Activated CD4-positive, alpha-beta memory T cell treated with anti-CD3 and anti-CD28 coated beads, Interleukin-2, amount 10 ng/mL, durations not matched to agents 7 days and 5 days (primary cell): ENCODE measurements at regions of chr17 and their contacts with region 1.

Region 1: DNA sequence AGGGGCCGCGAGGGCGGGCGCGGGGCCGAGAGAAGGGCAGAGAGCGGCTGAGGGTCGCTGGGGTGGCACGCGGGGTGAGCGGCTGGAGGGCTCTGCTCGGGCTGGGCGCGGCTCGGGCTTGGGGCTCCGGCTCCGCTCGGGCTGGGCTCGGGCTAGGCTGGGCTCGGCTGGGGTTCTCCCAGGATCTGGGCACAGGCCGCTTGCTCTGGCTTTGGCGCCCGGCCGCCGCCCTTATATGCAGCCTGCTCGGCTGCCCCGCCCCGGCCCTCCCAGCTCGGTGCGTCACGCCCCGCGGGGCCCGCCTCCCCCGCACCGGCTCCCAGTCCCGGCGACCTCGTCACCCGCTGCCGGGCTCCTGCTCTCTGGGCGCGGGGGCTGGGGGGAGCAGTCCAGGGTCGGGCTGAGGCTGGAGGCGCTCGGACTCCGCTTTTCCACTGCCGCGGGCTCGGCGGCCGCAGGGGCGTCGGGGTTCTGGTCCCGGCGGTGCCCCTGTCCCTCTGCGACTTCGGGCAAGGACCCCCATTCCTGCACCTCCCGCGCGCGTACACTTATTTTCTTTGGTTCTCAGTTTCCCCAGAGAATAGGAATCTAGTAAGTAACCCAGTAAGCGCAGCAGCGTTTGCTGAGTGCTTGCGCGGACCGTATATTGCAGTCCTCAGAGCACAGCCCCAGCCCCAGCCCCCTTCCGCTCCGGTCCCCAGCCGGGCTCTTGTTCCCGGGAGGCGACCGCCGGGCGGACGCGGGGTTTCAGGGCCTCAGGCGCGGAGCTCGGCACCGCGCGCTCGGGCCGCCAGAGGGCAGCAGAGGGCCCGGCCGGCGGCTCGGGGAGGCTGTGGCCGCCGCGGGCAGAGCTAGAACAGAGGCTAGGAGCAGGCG is at the start of gene RASD1:
- DNase-seq: peak; percentile 85
- H3K4me3 Mint-ChIP-seq: peak within 1 kb of the TSS; percentile 47
- H3K27ac Mint-ChIP-seq: no peak within 1 kb of the TSS
- H3K4me1 Mint-ChIP-seq: peaks cover 15% of the 10 kb centered on the region
- H3K27me3 Mint-ChIP-seq: peaks cover 16% of the 10 kb centered on the region
- total RNA-seq, gene RASD1: 1.5 to 2.0 TPM

Region 2: GRCh38 chr17:17356149-17356930 is 140.1 kb before region 1 on chr17:
- CTCF ChIA-PET with region 1: interaction called, 18 read pairs
- POLR2A ChIA-PET with region 1: interaction called, 3 read pairs
- DNase-seq: peak; percentile 77
- H3K4me3 Mint-ChIP-seq: no peak overlapping the region
- H3K27ac Mint-ChIP-seq: no peak overlapping the region
- H3K4me1 Mint-ChIP-seq: no peaks in the 10 kb centered on the region
- H3K27me3 Mint-ChIP-seq: peaks cover 22% of the 10 kb centered on the region

Region 3: GRCh38 chr17:17401271-17401781 is 95.1 kb before region 1 on chr17:
- CTCF ChIA-PET with region 1: no interaction called
- POLR2A ChIA-PET with region 1: no interaction called
- DNase-seq: no peak
- H3K4me3 Mint-ChIP-seq: no peak overlapping the region
- H3K27ac Mint-ChIP-seq: no peak overlapping the region
- H3K4me1 Mint-ChIP-seq: peaks cover 46% of the 10 kb centered on the region
- H3K27me3 Mint-ChIP-seq: peaks cover 2% of the 10 kb centered on the region

Region 4: DNA sequence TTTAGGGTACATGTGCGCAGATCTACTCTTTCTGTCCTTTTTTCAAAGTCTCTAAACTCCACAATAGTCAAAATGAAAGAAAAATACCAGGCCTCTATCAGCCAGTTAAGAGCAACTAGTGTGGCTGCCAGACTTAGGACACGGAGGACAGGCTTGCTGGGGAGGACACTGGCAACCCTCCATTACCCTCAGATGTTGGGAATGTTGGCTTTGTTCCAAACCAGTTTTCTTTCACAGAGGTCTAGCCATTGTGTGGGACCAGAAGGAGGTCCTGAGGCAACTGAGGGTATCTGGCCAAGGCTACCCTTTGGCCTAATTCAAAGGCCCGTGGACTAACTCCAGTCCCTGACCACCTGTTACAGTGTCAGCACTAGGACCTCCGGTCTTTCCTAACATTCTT is 70.8 kb before region 1 on chr17:
- CTCF ChIA-PET with region 1: no interaction called
- POLR2A ChIA-PET with region 1: no interaction called
- DNase-seq: no peak
- H3K4me3 Mint-ChIP-seq: no peak overlapping the region
- H3K27ac Mint-ChIP-seq: no peak overlapping the region
- H3K4me1 Mint-ChIP-seq: no peaks in the 10 kb centered on the region
- H3K27me3 Mint-ChIP-seq: peaks cover 17% of the 10 kb centered on the region

Region 5: DNA sequence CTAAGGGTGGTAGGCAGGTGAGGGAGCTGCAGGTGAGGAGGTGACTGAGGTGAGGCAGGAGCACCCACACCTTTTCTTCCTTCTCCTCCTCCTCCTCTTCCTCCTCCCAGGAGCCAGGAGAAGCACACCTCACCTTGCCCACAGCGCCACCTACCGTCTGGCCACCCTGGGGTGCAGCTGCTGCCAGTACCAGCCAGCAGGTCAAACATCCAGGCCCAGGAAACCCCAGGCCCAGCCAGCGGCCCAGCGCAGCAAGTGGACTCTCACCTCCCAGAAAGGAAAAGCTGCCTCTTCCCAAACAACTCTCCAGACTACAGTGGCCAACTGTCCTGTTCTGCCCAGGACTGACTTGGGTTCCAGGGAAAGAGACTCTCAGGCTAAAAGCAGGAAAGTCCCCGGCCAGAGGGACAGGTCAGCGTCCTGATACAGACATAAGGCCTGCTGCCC is 72.3 kb after region 1 on chr17:
- CTCF ChIA-PET with region 1: interaction called, 28 read pairs
- POLR2A ChIA-PET with region 1: interaction called, 4 read pairs
- DNase-seq: peak; percentile 71
- H3K4me3 Mint-ChIP-seq: no peak overlapping the region
- H3K27ac Mint-ChIP-seq: no peak overlapping the region
- H3K4me1 Mint-ChIP-seq: no peaks in the 10 kb centered on the region
- H3K27me3 Mint-ChIP-seq: no peaks in the 10 kb centered on the region

Region 6: DNA sequence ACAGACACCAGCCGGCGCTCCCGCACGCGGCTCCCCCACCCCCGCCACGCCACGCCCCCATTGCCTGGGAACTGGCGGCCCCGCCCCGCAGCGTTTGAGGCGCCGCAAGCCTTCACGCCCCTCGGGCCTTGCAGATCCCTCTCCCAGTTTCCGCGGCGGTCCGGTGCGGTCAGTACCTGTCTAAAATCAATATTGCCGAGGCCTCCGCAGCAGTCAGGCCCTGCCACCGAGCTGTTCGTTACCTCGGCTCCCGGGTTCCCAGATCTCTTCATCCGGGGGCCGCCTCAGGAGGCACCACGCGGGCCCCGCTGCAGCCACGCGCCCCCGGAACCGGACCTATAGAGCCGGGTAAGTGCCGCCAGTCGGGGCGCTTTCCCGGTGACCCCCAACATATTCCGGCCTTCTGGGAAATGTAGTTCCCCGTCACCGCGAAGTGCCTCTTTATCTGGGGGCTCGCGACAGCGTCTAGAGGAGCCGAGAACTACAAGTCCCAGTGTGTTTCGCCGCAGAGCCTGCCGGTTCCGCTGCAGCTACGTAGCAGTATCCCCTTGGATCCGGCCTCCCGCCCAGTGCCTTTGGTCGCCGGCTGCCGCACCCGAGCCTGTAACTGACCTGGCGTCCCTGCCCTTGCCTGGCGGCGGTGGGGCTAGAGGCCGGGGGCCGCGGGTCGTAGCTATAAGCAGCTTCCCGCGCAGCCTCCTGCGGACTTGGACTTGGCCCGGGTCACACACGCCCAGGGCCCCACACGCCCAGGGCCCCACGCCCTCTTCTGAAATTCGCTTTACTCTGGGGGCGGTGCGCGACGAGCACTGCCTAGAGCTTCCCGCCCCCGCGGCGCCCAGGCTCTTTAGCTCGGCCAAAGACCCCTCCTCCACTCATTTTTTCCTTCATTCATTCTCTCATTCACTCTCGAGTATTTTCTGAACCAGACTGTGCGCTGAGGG is 95.2 kb after region 1 on chr17 and contains the start of gene PEMT:
- CTCF ChIA-PET with region 1: interaction called, 14 read pairs
- POLR2A ChIA-PET with region 1: interaction called, 13 read pairs
- DNase-seq: peak; percentile 96
- H3K4me3 Mint-ChIP-seq: peak within 1 kb of the TSS; percentile 84
- H3K27ac Mint-ChIP-seq: peak within 1 kb of the TSS; percentile 75
- H3K4me1 Mint-ChIP-seq: peaks cover 20% of the 10 kb centered on the region
- H3K27me3 Mint-ChIP-seq: no peaks in the 10 kb centered on the region
- total RNA-seq, gene PEMT: 17.2 to 22.0 TPM

Region 7: GRCh38 chr17:17641621-17642409 is 145.4 kb after region 1 on chr17:
- CTCF ChIA-PET with region 1: interaction called, 51 read pairs
- POLR2A ChIA-PET with region 1: interaction called, 6 read pairs
- DNase-seq: peak; percentile 83
- H3K4me3 Mint-ChIP-seq: no peak overlapping the region
- H3K27ac Mint-ChIP-seq: no peak overlapping the region
- H3K4me1 Mint-ChIP-seq: no peaks in the 10 kb centered on the region
- H3K27me3 Mint-ChIP-seq: peaks cover 4% of the 10 kb centered on the region